ENCODE measurements at regions of chr16 and their contacts with region 1.

Region 1: DNA sequence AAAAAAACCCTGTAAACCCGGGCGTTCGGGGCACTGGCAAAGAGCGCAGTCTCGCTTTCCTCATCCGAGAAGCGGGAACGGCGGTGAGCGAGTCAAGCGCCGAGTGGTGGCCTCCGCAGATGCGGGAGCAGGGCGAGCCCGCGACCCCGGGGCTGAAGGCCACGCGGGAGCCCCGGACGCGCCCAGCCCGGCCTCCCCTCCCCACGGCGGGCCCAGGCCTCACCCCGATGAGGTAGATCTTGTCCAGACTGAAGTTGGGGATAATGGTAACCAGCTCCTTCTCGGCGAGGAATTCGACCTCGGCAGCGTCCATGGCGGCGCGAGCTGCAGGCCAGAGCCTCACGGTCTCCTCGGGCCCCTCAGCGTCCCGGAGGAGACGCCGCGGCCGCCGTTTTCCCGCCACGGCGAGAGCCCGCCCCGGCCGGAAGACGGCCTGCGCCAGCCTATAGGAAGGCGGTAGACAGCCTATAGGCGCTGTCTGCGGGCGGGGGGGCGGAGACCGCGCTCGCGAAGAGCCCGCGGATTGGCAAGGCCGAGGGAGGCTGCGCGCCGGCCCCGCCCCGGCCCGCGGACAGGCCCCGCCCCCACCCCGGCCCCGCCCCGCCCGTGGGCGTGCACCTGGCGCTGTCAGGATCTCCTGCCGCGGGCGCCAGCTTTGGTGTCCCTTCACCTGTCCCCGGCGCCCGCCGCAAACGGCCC is at the start of gene GINS2:
- DNase-seq: peak; percentile 80 to 95 (median 88)
- ATAC-seq: peak; percentile 99
- H3K4me3 ChIP-seq: peak within 1 kb of the TSS; percentile 57
- H3K4me3 Mint-ChIP-seq: peak within 1 kb of the TSS; percentile 91
- H3K27ac ChIP-seq: no peak within 1 kb of the TSS
- H3K27ac Mint-ChIP-seq: peak within 1 kb of the TSS; percentile 61
- H3K4me1 ChIP-seq: peaks cover 26% of the 10 kb centered on the region
- H3K4me1 Mint-ChIP-seq: no peaks in the 10 kb centered on the region
- H3K27me3 ChIP-seq: peaks cover 0 to 2% of the 10 kb centered on the region in 2 experiments
- H3K27me3 Mint-ChIP-seq: peaks cover 6% of the 10 kb centered on the region
- CTCF ChIP-seq: no peak
- total RNA-seq, gene GINS2: 1.1 to 1.4 TPM

Region 2: DNA sequence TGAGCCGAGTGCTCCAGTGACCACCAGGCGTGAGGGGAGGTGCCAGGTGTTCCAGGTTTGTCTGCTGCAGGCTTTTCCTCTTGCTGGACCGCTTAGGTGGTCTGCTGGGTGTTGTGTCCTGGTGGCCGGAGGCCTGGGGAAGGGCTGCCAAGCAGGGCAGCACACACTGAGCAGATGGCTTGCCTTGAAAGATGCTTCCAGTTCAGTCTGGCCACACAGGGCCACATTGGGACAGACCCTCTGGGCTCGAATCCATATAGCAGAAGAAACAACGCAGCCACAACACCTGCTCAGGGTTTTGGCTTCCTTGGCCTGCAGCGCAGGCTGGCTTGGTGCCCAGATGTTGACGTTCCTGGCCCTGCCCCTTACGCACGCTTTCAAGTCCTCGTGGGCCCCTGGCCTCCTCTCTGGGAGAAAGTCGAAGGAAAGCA is 24.8 kb before region 1 on chr16:
- CTCF ChIA-PET with region 1: no interaction called
- POLR2A ChIA-PET with region 1: no interaction called
- intact Hi-C with region 1: no loop called
- DNase-seq: no peak
- ATAC-seq: no peak
- H3K4me3 ChIP-seq: no peak overlapping the region
- H3K4me3 Mint-ChIP-seq: no peak overlapping the region
- H3K27ac ChIP-seq: no peak overlapping the region
- H3K27ac Mint-ChIP-seq: no peak overlapping the region
- H3K4me1 ChIP-seq: no peaks in the 10 kb centered on the region
- H3K4me1 Mint-ChIP-seq: no peaks in the 10 kb centered on the region
- H3K27me3 ChIP-seq: no peaks in the 10 kb centered on the region
- H3K27me3 Mint-ChIP-seq: no peaks in the 10 kb centered on the region
- CTCF ChIP-seq: no peak

Region 3: DNA sequence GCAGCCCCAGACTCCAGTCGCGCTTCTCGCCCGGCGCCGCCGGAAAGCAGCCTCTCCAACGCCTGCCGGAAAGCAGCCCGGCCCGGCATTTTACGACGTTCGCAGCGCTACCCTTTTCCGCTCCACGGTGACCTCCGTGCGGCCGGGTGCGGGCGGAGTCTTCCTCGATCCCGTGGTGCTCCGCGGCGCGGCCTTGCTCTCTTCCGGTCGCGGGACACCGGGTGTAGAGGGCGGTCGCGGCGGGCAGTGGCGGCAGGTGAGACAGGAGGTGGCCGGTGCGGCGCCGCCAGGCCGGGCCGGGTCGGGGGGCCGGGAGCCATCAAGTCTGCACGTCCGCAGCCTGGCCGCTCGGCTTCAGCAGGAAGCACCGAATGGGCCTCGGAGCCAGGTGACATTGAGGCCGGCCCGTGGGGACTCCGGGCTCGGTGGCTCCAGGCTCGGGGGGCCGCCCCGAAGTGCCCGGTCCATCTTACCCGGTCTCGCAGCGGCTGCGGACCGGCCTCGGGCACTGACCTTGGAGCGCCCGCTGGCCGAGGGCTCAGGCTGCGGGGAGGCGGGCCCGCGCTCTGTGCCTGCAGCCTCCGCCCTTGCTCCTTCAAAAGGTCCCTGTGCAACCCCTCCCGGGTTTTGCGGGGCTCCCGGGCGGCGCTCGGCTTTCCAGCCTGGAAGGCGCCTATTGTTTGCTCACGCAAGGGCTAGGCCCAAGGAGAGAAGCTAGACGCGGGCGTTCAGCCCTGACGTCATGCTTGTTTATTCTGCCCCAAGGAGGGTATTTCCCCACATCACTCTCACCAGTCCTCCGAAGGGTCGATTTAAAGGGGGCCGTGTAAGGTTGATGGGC is 111.0 kb after region 1 on chr16 and contains the starts of genes COX4I1 and EMC8:
- CTCF ChIA-PET with region 1: no interaction called
- POLR2A ChIA-PET with region 1: no interaction called
- intact Hi-C with region 1: loop called in 1 of 2 experiments (anchors 5 kb)
- DNase-seq: peak; percentile 85 to 96 (median 90)
- ATAC-seq: peak; percentile 79
- H3K4me3 ChIP-seq: peak within 1 kb of the TSS; percentile 84
- H3K4me3 Mint-ChIP-seq: peak within 1 kb of the TSS; percentile 97
- H3K27ac ChIP-seq: peak within 1 kb of the TSS; percentile 61 to 95
- H3K27ac Mint-ChIP-seq: peak within 1 kb of the TSS; percentile 99
- H3K4me1 ChIP-seq: peaks cover 40% of the 10 kb centered on the region
- H3K4me1 Mint-ChIP-seq: peaks cover 78% of the 10 kb centered on the region
- H3K27me3 ChIP-seq: no peaks in the 10 kb centered on the region
- H3K27me3 Mint-ChIP-seq: no peaks in the 10 kb centered on the region
- CTCF ChIP-seq: no peak
- total RNA-seq, gene COX4I1: 749 to 750 TPM
- total RNA-seq, gene EMC8: 38.9 to 41.7 TPM

Region 4: GRCh38 chr16:86554917-86555703 is 866.4 kb after region 1 on chr16 and contains the start of gene MTHFSD:
- CTCF ChIA-PET with region 1: no interaction called
- POLR2A ChIA-PET with region 1: no interaction called
- intact Hi-C with region 1: loop called in 1 of 2 experiments (anchors 5 kb)
- DNase-seq: peak; percentile 90 to 99 (median 96)
- ATAC-seq: peak; percentile 93
- H3K4me3 ChIP-seq: peak within 1 kb of the TSS; percentile 96
- H3K4me3 Mint-ChIP-seq: peak within 1 kb of the TSS; percentile 99
- H3K27ac ChIP-seq: peak within 1 kb of the TSS; percentile 77 to 93
- H3K27ac Mint-ChIP-seq: peak within 1 kb of the TSS; percentile 99
- H3K4me1 ChIP-seq: peaks cover 22% of the 10 kb centered on the region
- H3K4me1 Mint-ChIP-seq: peaks cover 29% of the 10 kb centered on the region
- H3K27me3 ChIP-seq: peaks cover 3 to 16% of the 10 kb centered on the region in 2 experiments
- H3K27me3 Mint-ChIP-seq: peaks cover 23% of the 10 kb centered on the region
- CTCF ChIP-seq: no peak
- total RNA-seq, gene MTHFSD: 7.3 to 7.9 TPM